ENCODE measurements at regions of chr18 and their contacts with region 1.

Region 1: GRCh38 chr18:34224423-34225217 is at the start of gene NOL4:
- DNase-seq: peak; percentile 95
- H3K4me3 ChIP-seq: peak within 1 kb of the TSS; percentile 67
- H3K27ac ChIP-seq: peak within 1 kb of the TSS; percentile 69
- H3K4me1 ChIP-seq: peaks cover 4% of the 10 kb centered on the region
- H3K27me3 ChIP-seq: peaks cover 13% of the 10 kb centered on the region
- CTCF ChIP-seq: peak; percentile 41
- total RNA-seq, gene NOL4: 34.4 and 36.7 TPM in 2 replicates

Region 2: DNA sequence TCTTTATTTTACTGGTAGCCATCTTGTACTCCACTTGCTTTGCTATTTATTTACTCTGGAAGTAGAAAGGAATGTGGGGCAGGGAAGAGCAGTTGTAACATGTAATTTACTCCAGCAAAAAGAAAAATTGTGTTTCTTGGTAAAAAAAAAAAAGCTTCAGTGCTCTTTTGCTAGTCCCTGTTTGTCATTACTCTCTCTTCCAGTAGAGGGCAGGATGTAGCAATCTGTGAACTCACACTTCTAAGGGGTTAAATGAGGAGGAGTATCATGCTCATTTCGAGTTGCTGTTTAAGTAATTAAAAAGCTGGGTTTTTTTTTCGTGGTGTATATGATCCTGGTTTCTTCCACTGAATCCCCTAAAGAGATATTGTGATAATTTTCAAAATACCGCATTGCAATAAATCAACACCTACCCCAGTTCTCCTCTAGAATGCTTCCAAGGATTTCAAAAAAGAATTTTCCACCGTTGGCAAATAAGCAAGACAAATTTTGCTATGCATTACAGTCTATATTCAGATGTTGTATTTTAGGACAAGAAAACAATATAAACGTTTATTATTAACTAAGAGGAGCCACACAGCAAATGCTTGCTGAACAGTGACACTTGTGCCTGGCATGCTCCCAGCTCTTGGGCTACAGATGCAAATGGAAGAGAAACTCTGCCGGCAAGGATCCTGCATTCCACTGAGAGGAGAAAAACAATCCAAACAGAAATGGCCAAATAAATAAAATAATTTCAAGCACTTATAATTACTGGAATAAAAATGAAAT is 385.0 kb before region 1 on chr18:
- CTCF ChIA-PET with region 1: no interaction called
- POLR2A ChIA-PET with region 1: no interaction called
- intact Hi-C with region 1: loop called (anchors 10 kb)
- DNase-seq: peak; percentile 84
- H3K4me3 ChIP-seq: no peak overlapping the region
- H3K27ac ChIP-seq: no peak overlapping the region
- H3K4me1 ChIP-seq: peaks cover 18% of the 10 kb centered on the region
- H3K27me3 ChIP-seq: no peaks in the 10 kb centered on the region
- CTCF ChIP-seq: peak; percentile 87

Region 3: DNA sequence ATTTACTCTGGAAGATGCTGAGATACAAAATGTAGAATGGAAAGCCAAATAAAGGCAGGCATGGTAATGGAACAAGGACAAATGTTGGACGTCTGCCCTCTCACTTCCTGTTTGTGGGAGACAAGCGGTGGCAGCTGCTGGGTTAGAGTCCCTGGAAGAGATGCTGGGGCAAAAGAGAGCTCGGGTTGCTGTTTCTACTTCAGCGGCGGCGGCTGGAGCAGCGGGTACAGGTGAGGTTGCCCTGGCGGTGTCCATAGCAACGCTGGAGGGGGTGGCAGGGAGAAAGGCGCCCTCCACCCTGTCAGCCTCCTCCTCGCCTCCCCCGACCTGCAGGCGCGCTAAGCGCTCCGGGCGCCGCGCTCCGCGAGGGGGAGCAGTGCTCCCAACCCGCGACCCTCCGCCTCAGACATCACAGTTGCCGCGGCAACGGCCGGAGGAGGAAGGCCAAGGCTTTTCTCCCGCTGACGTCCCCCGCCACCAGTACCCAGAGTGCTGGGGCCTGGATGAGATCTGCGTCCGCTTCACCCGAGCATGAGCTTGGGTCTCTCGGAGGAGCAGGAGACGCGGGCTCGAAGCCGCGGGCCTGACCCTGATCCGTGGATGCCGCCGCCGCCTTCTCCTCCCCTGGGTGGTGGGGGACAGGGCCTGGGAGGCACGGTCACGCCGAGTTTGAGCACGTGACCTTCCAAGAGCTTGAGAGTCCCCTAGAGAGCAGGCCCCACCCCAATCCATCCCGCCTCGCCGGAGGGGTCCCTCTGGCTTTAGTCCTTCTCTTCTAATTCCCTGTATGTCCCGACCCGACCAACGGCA is 65.5 kb before region 1 on chr18:
- CTCF ChIA-PET with region 1: no interaction called
- POLR2A ChIA-PET with region 1: no interaction called
- intact Hi-C with region 1: loop called (anchors 2 kb)
- DNase-seq: peak; percentile 90
- H3K4me3 ChIP-seq: peak overlapping the region; percentile 65
- H3K27ac ChIP-seq: peak overlapping the region; percentile 77
- H3K4me1 ChIP-seq: peaks cover 36% of the 10 kb centered on the region
- H3K27me3 ChIP-seq: no peaks in the 10 kb centered on the region
- CTCF ChIP-seq: peak; percentile 66

Region 4: GRCh38 chr18:34322365-34323289 is 98.0 kb after region 1 on chr18:
- CTCF ChIA-PET with region 1: interaction called, 5 read pairs
- POLR2A ChIA-PET with region 1: no interaction called
- intact Hi-C with region 1: loop called (anchors 5 kb)
- DNase-seq: peak; percentile 87
- H3K4me3 ChIP-seq: no peak overlapping the region
- H3K27ac ChIP-seq: no peak overlapping the region
- H3K4me1 ChIP-seq: peaks cover 4% of the 10 kb centered on the region
- H3K27me3 ChIP-seq: no peaks in the 10 kb centered on the region
- CTCF ChIP-seq: peak; percentile 95

Region 5: GRCh38 chr18:34514238-34514637 is 289.6 kb after region 1 on chr18:
- CTCF ChIA-PET with region 1: no interaction called
- POLR2A ChIA-PET with region 1: no interaction called
- intact Hi-C with region 1: no loop called
- DNase-seq: no peak
- H3K4me3 ChIP-seq: no peak overlapping the region
- H3K27ac ChIP-seq: no peak overlapping the region
- H3K4me1 ChIP-seq: no peaks in the 10 kb centered on the region
- H3K27me3 ChIP-seq: no peaks in the 10 kb centered on the region
- CTCF ChIP-seq: no peak

Measured in A673 (cell line).